ENCODE measurements at regions of chr5 and their contacts with region 1.

Region 1: DNA sequence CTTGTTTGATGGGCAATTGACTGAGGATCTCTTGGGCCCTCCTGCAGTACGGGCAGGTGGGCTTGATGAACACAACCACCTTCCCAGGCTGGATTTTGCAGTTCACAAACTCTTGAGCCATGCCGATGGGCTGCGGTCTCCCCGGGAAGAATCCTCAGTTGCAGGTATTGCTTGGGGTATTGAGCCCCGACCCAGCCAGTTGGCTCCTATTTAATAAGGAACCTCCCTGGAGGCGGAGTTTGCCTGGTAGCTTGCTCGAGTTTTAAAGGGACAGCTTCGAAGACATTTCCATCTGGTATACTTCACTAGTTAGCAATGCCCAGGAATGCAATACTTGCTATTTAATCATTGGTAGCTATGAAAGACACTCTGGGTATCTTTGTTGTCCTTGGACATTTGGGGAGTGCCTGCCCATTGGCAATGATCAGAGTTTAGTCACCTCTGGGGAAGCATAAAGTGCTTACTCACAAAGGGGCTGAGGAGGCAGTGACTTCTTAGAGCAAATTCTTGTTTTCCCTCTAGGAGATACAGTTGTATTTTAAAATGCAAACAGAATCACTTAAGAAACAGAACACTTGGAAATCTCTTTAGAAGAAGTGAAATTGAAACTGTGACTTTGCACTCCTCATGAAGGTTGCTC is at the start of gene GLRX:
- DNase-seq: peak; percentile 91
- H3K4me3 Mint-ChIP-seq: peak within 1 kb of the TSS; percentile 91
- H3K27ac Mint-ChIP-seq: peak within 1 kb of the TSS; percentile 86
- H3K4me1 Mint-ChIP-seq: peaks cover 64% of the 10 kb centered on the region
- H3K27me3 Mint-ChIP-seq: no peaks in the 10 kb centered on the region
- total RNA-seq, gene GLRX: 13.5 and 17.3 TPM in 2 replicates

Region 2: DNA sequence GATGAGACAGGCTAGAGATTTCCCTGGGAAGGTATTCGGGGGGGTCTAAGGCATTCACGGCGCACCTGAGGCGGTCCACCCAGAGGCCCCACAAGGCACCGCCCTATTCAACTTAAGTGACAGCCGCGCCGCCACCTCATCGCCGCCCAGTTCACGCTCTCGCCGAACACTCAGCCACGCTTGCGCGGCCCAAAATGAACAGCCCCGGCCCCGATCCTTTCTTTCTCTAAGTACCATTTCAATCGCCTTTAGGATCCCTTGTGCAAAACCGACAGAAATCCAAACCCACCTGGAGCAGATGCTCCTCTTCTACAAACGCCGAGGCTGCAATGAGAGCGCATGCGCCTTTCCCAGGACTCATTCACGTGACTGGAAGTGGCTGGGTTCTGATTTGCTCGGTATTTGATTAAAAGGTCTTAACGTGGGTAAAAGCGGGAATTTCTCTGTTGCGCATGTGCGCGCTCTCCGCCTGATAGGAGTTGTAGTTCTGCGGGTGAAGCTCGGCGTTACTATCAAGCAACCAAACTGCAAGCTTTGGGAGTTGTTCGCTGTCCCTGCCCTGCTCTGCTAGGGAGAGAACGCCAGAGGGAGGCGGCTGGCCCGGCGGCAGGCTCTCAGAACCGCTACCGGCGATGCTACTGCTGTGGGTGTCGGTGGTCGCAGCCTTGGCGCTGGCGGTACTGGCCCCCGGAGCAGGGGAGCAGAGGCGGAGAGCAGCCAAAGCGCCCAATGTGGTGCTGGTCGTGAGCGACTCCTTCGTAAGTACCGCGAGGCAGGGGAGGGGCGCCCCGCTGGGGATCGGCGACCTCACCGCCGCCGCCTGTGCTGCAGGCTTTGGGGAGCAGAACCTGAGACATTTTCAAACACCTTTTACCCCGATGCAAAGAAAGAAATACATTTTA is 267.8 kb before region 1 on chr5 and contains the starts of genes ARSK and SKIC3:
- intact Hi-C with region 1: loop called (anchors 5 kb)
- DNase-seq: peak; percentile 97
- H3K4me3 Mint-ChIP-seq: peak within 1 kb of the TSS; percentile 96
- H3K27ac Mint-ChIP-seq: peak within 1 kb of the TSS; percentile 94
- H3K4me1 Mint-ChIP-seq: peaks cover 40% of the 10 kb centered on the region
- H3K27me3 Mint-ChIP-seq: no peaks in the 10 kb centered on the region
- total RNA-seq, gene ARSK: 3.2 and 4.1 TPM in 2 replicates
- total RNA-seq, gene SKIC3: 61.2 and 69.5 TPM in 2 replicates

Region 3: GRCh38 chr5:95760273-95761191 is 62.1 kb before region 1 on chr5:
- intact Hi-C with region 1: loop called (anchors 1 kb)
- DNase-seq: no peak
- H3K4me3 Mint-ChIP-seq: peak overlapping the region; percentile 68
- H3K27ac Mint-ChIP-seq: peak overlapping the region; percentile 77
- H3K4me1 Mint-ChIP-seq: peaks cover 23% of the 10 kb centered on the region
- H3K27me3 Mint-ChIP-seq: peaks cover 42% of the 10 kb centered on the region

Region 4: GRCh38 chr5:95781101-95781583 is 41.5 kb before region 1 on chr5:
- intact Hi-C with region 1: loop called (anchors 1 kb)
- DNase-seq: peak; percentile 90
- H3K4me3 Mint-ChIP-seq: peak overlapping the region; percentile 56
- H3K27ac Mint-ChIP-seq: no peak overlapping the region
- H3K4me1 Mint-ChIP-seq: peaks cover 16% of the 10 kb centered on the region
- H3K27me3 Mint-ChIP-seq: peaks cover 7% of the 10 kb centered on the region

Region 5: GRCh38 chr5:95808686-95809413 is 13.8 kb before region 1 on chr5:
- intact Hi-C with region 1: loop called (anchors 1 kb)
- DNase-seq: peak; percentile 95
- H3K4me3 Mint-ChIP-seq: peak overlapping the region; percentile 72
- H3K27ac Mint-ChIP-seq: peak overlapping the region; percentile 78
- H3K4me1 Mint-ChIP-seq: peaks cover 52% of the 10 kb centered on the region
- H3K27me3 Mint-ChIP-seq: no peaks in the 10 kb centered on the region

Region 6: DNA sequence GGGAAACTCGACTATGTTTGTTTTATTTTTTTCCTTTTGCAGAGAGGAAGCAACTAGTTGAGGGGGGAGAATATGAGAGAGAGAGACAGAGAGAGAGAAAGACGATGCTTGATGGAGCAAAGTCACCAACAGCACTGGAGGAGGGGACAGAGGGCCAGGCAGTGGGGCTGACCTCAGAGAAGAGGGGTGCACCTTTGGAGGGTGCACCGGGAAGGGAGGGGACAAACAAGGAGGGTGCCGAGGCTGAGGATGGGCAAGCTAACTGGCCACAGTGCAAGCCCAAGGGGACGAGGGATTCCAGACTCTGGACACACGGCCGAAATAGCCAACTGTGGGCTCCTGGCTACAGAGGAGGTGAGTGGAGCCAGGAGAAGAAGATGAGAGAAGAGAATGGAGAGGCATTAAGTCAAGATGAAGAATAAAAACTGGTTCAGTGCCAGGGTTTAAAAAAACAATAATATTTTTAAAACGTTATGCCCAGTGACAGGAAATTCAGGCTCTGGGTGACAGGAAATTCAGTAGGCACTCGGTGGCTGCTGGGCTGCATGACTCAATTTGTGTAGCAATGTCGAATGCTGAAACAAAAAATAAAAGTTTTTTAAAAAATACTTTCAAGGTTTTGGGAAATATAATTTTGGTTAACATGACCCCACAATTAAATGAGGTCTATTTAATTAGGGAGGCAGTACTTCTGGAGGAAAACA is 13.2 kb after region 1 on chr5:
- intact Hi-C with region 1: loop called (anchors 1 kb)
- DNase-seq: no peak
- H3K4me3 Mint-ChIP-seq: peak overlapping the region; percentile 78
- H3K27ac Mint-ChIP-seq: peak overlapping the region; percentile 74
- H3K4me1 Mint-ChIP-seq: peaks cover 31% of the 10 kb centered on the region
- H3K27me3 Mint-ChIP-seq: no peaks in the 10 kb centered on the region

Region 7: GRCh38 chr5:95858661-95859326 is 36.1 kb after region 1 on chr5:
- intact Hi-C with region 1: no loop called
- DNase-seq: peak; percentile 96
- H3K4me3 Mint-ChIP-seq: peak overlapping the region; percentile 66
- H3K27ac Mint-ChIP-seq: peak overlapping the region; percentile 78
- H3K4me1 Mint-ChIP-seq: peaks cover 52% of the 10 kb centered on the region
- H3K27me3 Mint-ChIP-seq: no peaks in the 10 kb centered on the region

Region 8: DNA sequence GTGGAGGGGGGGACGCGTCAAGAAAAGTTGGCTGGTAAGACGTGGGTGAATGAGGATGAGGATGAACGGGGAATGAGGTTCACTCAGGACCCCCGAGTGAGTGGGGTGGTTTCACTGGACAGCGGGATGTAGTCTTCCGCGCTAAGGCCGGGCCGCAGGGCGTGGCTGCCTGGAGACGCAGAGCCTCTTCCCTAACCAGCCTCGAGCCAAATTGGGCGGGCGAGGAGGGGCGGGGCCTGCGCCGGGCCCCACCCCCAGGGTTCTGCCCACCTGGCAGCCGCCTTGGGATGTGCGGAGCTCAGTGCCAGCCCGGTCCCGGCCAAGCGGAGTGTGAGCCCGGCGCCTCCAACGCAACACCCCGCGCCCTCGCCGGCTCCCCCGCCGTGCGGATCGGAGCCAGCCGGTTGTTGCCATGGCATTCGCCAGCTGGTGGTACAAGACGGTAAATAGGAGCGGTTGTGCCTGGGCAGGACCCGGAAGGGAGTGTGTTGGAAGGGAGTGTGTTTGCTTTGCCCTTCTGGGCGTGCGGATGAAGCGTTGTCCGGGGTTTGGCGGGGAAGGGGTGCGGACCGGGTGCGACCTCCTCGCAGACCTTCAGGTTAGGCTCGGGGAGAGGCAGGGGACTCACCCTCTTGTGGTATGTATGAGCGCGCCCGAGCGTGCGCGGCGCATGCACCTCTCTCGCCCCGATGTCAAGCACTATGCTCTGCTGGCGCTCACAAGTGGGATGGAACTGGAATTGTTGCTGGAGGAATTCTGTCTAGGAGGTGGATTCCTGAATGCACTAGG is 840.3 kb after region 1 on chr5:
- intact Hi-C with region 1: loop called (anchors 5 kb)
- DNase-seq: peak; percentile 96
- H3K4me3 Mint-ChIP-seq: peak overlapping the region; percentile 99
- H3K27ac Mint-ChIP-seq: peak overlapping the region; percentile 99
- H3K4me1 Mint-ChIP-seq: peaks cover 49% of the 10 kb centered on the region
- H3K27me3 Mint-ChIP-seq: peaks cover 12% of the 10 kb centered on the region